ENCODE measurements at regions of chr9 and their contacts with region 1.

Region 1: GRCh38 chr9:18569941-18570630 is 96.1 kb downstream of the ADAMTSL1 start:
- DNase-seq: no peak
- ATAC-seq: no peak
- H3K4me3 ChIP-seq: no peak overlapping the region
- H3K27ac ChIP-seq: no peak overlapping the region
- H3K4me1 ChIP-seq: no peaks in the 10 kb centered on the region
- H3K27me3 ChIP-seq: no peaks in the 10 kb centered on the region
- CTCF ChIP-seq: no peak
- POLR2A ChIP-seq: no peak

Region 2: GRCh38 chr9:18442629-18443491 is 127.2 kb before region 1 on chr9:
- intact Hi-C with region 1: no loop called
- DNase-seq: peak; percentile 68 to 81 (median 72)
- ATAC-seq: peak; percentile 74 to 89 (median 81)
- H3K4me3 ChIP-seq: no peak overlapping the region
- H3K27ac ChIP-seq: peak overlapping the region in 1 of 12 donors; percentile 31
- H3K4me1 ChIP-seq: peaks cover 0 to 21% (median 11%) of the 10 kb centered on the region in 12 donors
- H3K27me3 ChIP-seq: no peaks in the 10 kb centered on the region
- CTCF ChIP-seq: peak; percentile 86 to 97 (median 92)
- POLR2A ChIP-seq: no peak

Region 3: DNA sequence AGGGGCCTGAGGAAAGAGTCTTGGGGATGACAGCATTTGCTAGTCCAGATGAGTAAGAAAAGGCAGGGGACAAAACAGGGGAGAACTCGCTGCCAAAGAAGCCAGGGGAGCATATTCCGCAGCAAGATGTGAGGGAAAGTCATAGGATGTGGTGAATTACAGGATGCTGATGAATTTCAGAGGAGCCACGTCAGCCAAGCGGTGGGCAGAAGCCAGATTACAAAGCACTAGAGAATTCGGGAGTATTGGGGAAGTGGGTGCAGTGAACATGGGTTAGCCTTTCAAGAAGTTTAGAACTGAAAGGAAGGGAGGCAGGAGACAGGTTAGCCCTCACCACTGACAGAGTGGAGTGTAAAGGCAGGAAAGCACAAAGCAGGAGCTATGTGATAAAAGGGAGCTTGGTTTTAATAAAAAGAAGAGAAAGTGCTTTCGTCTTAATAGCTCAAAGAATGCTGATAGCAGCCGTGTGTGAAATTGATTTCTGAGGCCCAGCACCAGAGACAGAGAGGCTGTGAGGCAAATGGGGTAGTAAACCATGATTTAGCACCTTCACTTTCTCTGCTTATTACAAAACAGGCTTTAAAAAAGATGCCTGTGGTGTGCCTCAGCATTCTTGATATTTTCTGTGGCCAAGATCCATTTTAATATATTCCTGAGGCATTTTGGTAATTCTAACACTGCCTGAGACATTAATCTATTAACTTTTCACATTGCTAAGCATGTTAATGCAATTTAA is 79.3 kb before region 1 on chr9:
- intact Hi-C with region 1: loop called in 1 of 10 experiments (anchors 10 kb)
- DNase-seq: peak in 2 of 5 donors; percentile 34 to 41
- ATAC-seq: peak in 2 of 4 donors; percentile 52 to 59
- H3K4me3 ChIP-seq: peak overlapping the region in 3 of 12 donors; percentile 6 to 20 (median 15)
- H3K27ac ChIP-seq: peak overlapping the region in 6 of 12 donors; percentile 0 to 63 (median 44)
- H3K4me1 ChIP-seq: peaks cover 0 to 27% (median 1%) of the 10 kb centered on the region in 12 donors
- H3K27me3 ChIP-seq: no peaks in the 10 kb centered on the region
- CTCF ChIP-seq: no peak
- POLR2A ChIP-seq: no peak